Dorsolateral prefrontal cortex (tissue), 120 donors: ENCODE measurements at regions of chr12 and their contacts with region 1.

Region 1: DNA sequence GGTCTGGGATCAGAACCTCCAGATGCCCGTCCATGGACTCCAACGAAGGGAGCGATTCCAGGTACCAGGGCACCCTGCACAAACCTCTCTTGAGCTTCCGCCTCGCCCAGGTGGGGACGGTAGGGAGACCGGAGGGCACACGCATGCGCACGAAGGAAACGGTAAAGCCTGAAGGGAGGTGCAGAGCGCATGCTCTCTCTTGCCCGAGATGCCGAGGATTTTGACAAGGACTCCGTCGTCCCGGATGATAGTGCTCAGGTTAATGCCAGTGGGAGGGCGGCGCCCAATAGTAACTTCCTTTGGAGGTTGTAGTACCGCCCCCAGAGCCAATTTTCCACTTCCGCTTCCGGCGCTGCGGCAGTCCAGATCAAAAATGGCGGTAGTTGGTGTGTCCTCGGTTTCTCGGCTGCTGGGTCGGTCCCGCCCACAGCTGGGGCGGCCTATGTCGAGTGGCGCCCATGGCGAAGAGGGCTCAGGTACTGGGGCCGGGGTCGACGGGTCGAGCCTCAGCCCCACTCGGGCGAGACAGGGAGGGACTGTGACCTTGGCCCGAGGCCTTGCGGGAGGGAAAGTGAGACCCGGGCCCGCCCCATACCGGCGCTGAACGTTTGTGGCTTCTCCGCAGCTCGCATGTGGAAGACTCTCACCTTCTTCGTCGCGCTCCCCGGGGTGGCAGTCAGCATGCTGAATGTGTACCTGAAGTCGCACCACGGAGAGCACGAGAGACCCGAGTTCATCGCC is at the start of gene COX6A1:
- DNase-seq: peak; percentile 87 to 97 (median 96)
- H3K4me3 ChIP-seq: peak within 1 kb of the TSS; percentile 64 to 98 (median 88)
- H3K27ac ChIP-seq: peak within 1 kb of the TSS; percentile 40 to 93 (median 85)
- H3K27me3 ChIP-seq: no peaks in the 10 kb centered on the region
- CTCF ChIP-seq: peak in 42 of 56 donors; percentile 10 to 67 (median 41)
- total RNA-seq, gene COX6A1: 341 to 794 (median 594) TPM

Region 2: GRCh38 chr12:120686690-120687577 is 249.0 kb after region 1 on chr12 and contains the start of gene MLEC:
- intact Hi-C with region 1: no loop called
- DNase-seq: peak; percentile 96 to 99 (median 98)
- H3K4me3 ChIP-seq: peak within 1 kb of the TSS; percentile 70 to 100 (median 94)
- H3K27ac ChIP-seq: peak within 1 kb of the TSS; percentile 81 to 99 (median 96)
- H3K27me3 ChIP-seq: no peaks in the 10 kb centered on the region
- CTCF ChIP-seq: peak in 31 of 56 donors; percentile 8 to 58 (median 31)
- total RNA-seq, gene MLEC: 50.4 to 97.1 (median 73.3) TPM

Region 3: DNA sequence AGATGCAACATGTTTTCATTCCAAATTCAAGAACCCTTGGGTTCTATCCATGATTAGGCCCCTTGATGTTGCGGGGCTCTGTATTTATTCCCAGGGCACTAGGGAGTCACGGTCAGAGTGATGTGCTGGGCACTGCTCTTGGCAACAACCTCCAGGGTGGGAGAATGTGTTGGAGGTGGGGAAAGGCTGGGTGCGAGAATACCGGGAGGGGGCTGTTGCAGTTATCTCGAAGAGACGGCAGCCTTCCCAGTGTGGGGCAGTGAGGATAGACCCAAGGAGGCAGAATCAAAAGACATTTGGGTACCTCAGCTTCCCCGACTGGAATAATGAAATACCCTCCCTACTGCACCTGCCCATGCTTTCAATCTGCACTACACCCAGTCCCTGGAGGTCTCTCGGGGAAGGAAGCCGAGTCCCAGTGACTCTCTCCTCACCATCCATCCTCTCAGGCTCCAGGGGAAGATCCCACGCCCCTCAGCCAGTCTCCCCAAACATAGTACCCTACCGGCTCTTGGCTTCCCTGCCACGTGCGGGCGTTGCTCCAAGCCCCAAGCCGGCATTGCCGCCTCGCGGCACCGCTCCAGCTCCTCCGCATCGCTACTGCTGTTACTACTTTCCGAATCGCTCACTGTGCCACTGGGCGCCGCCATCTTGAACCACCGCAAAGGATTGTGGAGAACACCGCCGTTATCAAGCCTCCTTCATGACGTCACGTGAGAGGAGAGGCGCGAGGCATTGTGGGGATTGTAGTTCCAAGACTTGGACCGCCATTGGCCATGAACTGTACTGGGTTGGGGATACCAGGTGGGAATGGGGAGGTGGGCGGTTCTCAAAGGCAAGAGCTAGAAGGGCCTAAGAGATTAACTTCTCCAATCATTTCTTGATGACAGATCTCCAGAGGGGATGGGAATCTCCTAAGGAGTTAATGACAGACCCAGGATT is 578.2 kb after region 1 on chr12 and contains the start of gene C12orf43:
- intact Hi-C with region 1: loop called in 1 of 2 experiments (anchors 10 kb)
- DNase-seq: peak; percentile 93 to 98 (median 95)
- H3K4me3 ChIP-seq: peak within 1 kb of the TSS; percentile 64 to 99 (median 88)
- H3K27ac ChIP-seq: peak within 1 kb of the TSS in 54 of 59 donors; percentile 6 to 92 (median 76)
- H3K27me3 ChIP-seq: no peaks in the 10 kb centered on the region
- CTCF ChIP-seq: peak in 45 of 56 donors; percentile 11 to 67 (median 38)
- total RNA-seq, gene C12orf43: 13.9 to 45.8 (median 31.2) TPM